ENCODE measurements at regions of chr1 and their contacts with region 1.

Region 1: GRCh38 chr1:155017041-155017945 is 14.7 kb downstream of the ZBTB7B start:
- DNase-seq: peak; percentile 71 to 92 (median 88)
- ATAC-seq: peak; percentile 98
- H3K4me3 ChIP-seq: peak overlapping the region; percentile 31 to 46
- H3K4me3 Mint-ChIP-seq: peak overlapping the region; percentile 59
- H3K27ac ChIP-seq: no peak overlapping the region
- H3K27ac Mint-ChIP-seq: no peak overlapping the region
- H3K4me1 ChIP-seq: peaks cover 55% of the 10 kb centered on the region
- H3K4me1 Mint-ChIP-seq: peaks cover 44% of the 10 kb centered on the region
- H3K27me3 ChIP-seq: no peaks in the 10 kb centered on the region
- H3K27me3 Mint-ChIP-seq: no peaks in the 10 kb centered on the region
- CTCF ChIP-seq: peak; percentile 99

Region 2: GRCh38 chr1:154479764-154480421 is 537.4 kb before region 1 on chr1:
- CTCF ChIA-PET with region 1: interaction called, 3 read pairs
- POLR2A ChIA-PET with region 1: no interaction called
- intact Hi-C with region 1: loop called in 1 of 2 experiments (anchors 1 kb)
- DNase-seq: peak in 8 of 9 experiments; percentile 12 to 80 (median 58)
- ATAC-seq: peak; percentile 91
- H3K4me3 ChIP-seq: no peak overlapping the region
- H3K4me3 Mint-ChIP-seq: no peak overlapping the region
- H3K27ac ChIP-seq: no peak overlapping the region
- H3K27ac Mint-ChIP-seq: no peak overlapping the region
- H3K4me1 ChIP-seq: peaks cover 3% of the 10 kb centered on the region
- H3K4me1 Mint-ChIP-seq: peaks cover 9% of the 10 kb centered on the region
- H3K27me3 ChIP-seq: no peaks in the 10 kb centered on the region
- H3K27me3 Mint-ChIP-seq: peaks cover 3% of the 10 kb centered on the region
- CTCF ChIP-seq: peak; percentile 98

Region 3: GRCh38 chr1:154726443-154726842 is 290.9 kb before region 1 on chr1:
- CTCF ChIA-PET with region 1: no interaction called
- POLR2A ChIA-PET with region 1: no interaction called
- intact Hi-C with region 1: no loop called
- DNase-seq: no peak
- ATAC-seq: no peak
- H3K4me3 ChIP-seq: no peak overlapping the region
- H3K4me3 Mint-ChIP-seq: no peak overlapping the region
- H3K27ac ChIP-seq: no peak overlapping the region
- H3K27ac Mint-ChIP-seq: no peak overlapping the region
- H3K4me1 ChIP-seq: no peaks in the 10 kb centered on the region
- H3K4me1 Mint-ChIP-seq: no peaks in the 10 kb centered on the region
- H3K27me3 ChIP-seq: no peaks in the 10 kb centered on the region
- H3K27me3 Mint-ChIP-seq: peaks cover 4% of the 10 kb centered on the region
- CTCF ChIP-seq: no peak

Region 4: GRCh38 chr1:154878371-154879022 is 138.8 kb before region 1 on chr1:
- CTCF ChIA-PET with region 1: interaction called, 3 read pairs
- POLR2A ChIA-PET with region 1: no interaction called
- intact Hi-C with region 1: loop called in 1 of 2 experiments (anchors 1 kb)
- DNase-seq: peak; percentile 49 to 84 (median 74)
- ATAC-seq: peak; percentile 97
- H3K4me3 ChIP-seq: no peak overlapping the region
- H3K4me3 Mint-ChIP-seq: no peak overlapping the region
- H3K27ac ChIP-seq: no peak overlapping the region
- H3K27ac Mint-ChIP-seq: no peak overlapping the region
- H3K4me1 ChIP-seq: no peaks in the 10 kb centered on the region
- H3K4me1 Mint-ChIP-seq: no peaks in the 10 kb centered on the region
- H3K27me3 ChIP-seq: no peaks in the 10 kb centered on the region
- H3K27me3 Mint-ChIP-seq: no peaks in the 10 kb centered on the region
- CTCF ChIP-seq: peak; percentile 65

Region 5: GRCh38 chr1:154961497-154962262 is 55.6 kb before region 1 on chr1 and contains the start of gene PYGO2:
- CTCF ChIA-PET with region 1: interaction called, 109 read pairs
- POLR2A ChIA-PET with region 1: interaction called, 24 read pairs
- intact Hi-C with region 1: loop called (anchors 1 kb)
- DNase-seq: peak; percentile 62 to 90 (median 80)
- ATAC-seq: peak; percentile 75
- H3K4me3 ChIP-seq: peak within 1 kb of the TSS; percentile 68 to 96
- H3K4me3 Mint-ChIP-seq: peak within 1 kb of the TSS; percentile 91
- H3K27ac ChIP-seq: peak within 1 kb of the TSS; percentile 91 to 95
- H3K27ac Mint-ChIP-seq: peak within 1 kb of the TSS; percentile 93
- H3K4me1 ChIP-seq: peaks cover 27% of the 10 kb centered on the region
- H3K4me1 Mint-ChIP-seq: peaks cover 42% of the 10 kb centered on the region
- H3K27me3 ChIP-seq: no peaks in the 10 kb centered on the region
- H3K27me3 Mint-ChIP-seq: no peaks in the 10 kb centered on the region
- CTCF ChIP-seq: peak; percentile 69
- total RNA-seq, gene PYGO2: 25.1 to 26.7 TPM

Region 6: DNA sequence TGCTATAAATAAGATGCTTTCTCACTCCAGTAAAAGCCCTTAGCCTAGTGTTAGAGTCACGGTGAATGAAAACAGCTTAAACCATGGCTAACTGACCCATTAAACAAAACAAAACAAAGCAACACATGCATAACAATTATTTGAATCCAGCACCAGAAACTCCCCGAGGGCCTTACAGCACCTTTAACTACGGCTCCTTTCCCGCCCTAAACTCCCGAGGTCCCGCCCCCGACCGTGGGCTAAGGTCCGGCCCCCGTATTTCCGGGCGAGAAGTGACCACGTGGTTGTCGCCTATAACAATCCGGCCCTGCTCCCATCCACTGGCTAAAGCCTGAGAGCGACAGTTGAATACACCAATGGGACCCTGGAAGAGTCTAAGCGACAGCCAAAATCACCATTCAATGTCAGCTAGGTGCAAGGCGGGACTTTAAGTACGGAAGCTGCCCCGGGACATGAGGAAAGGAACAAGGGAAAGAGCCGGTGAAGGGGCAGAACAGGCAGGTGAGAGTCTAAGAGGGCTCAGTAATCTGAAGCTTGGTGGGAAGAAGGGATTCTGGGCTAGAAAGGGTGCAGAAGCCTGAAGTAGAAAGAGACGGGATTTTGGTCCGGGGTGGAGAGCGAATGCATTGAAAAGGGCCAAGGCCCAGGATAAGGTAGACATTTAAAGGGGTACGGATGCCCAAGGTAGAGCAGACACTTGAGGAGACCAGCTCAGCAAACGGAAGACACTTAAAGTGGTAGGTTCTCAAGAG is 34.2 kb before region 1 on chr1 and contains the start of gene FLAD1:
- CTCF ChIA-PET with region 1: interaction called, 177 read pairs
- POLR2A ChIA-PET with region 1: interaction called, 6 read pairs
- intact Hi-C with region 1: loop called (anchors 1 kb)
- DNase-seq: peak; percentile 86 to 99 (median 94)
- ATAC-seq: peak; percentile 98
- H3K4me3 ChIP-seq: peak within 1 kb of the TSS; percentile 57 to 86
- H3K4me3 Mint-ChIP-seq: no peak within 1 kb of the TSS
- H3K27ac ChIP-seq: peak within 1 kb of the TSS; percentile 51 to 82
- H3K27ac Mint-ChIP-seq: no peak within 1 kb of the TSS
- H3K4me1 ChIP-seq: peaks cover 12% of the 10 kb centered on the region
- H3K4me1 Mint-ChIP-seq: peaks cover 12% of the 10 kb centered on the region
- H3K27me3 ChIP-seq: no peaks in the 10 kb centered on the region
- H3K27me3 Mint-ChIP-seq: no peaks in the 10 kb centered on the region
- CTCF ChIP-seq: no peak
- total RNA-seq, gene FLAD1: 17.4 to 19.0 TPM